ENCODE measurements at regions of chr12 and their contacts with region 1.

Region 1: DNA sequence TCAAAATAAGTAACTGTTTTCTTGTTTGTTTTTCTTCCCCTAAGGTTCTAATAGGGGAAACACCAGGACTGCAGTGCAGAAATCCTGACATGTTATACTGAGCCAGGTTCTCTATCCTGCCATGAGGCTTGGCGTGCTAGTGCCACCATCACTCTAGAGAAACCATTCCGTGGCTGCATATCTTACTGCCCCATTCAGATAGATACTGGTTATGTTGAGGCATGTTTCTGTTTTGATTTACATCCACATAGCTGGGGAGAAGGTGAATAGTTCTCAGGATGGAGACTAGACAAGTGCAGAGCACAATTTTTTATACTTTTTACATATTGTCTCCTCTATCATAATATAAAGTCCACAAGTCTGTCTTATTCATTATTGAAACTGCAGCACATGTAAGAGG is 11.5 kb downstream of the MAGOHB start:
- DNase-seq: no peak
- H3K4me3 ChIP-seq: no peak overlapping the region
- H3K4me3 Mint-ChIP-seq: peak overlapping the region in 6 of 7 donors; percentile 41 to 83 (median 66)
- H3K27ac ChIP-seq: no peak overlapping the region
- H3K27ac Mint-ChIP-seq: peak overlapping the region in 5 of 8 donors; percentile 26 to 86 (median 40)
- H3K4me1 ChIP-seq: peaks cover 15% of the 10 kb centered on the region
- H3K4me1 Mint-ChIP-seq: peaks cover 24 to 40% (median 34%) of the 10 kb centered on the region in 3 donors
- H3K27me3 ChIP-seq: no peaks in the 10 kb centered on the region
- H3K27me3 Mint-ChIP-seq: no peaks in the 10 kb centered on the region

Region 2: GRCh38 chr12:10613349-10614055 is 11.6 kb after region 1 on chr12 and contains the start of gene MAGOHB:
- CTCF ChIA-PET with region 1: no interaction called
- POLR2A ChIA-PET with region 1: interaction called, 12 read pairs
- DNase-seq: peak; percentile 95 to 99 (median 97)
- H3K4me3 ChIP-seq: peak within 1 kb of the TSS; percentile 89
- H3K4me3 Mint-ChIP-seq: peak within 1 kb of the TSS; percentile 95 to 100 (median 99)
- H3K27ac ChIP-seq: peak within 1 kb of the TSS; percentile 97
- H3K27ac Mint-ChIP-seq: peak within 1 kb of the TSS; percentile 98 to 100 (median 99)
- H3K4me1 ChIP-seq: peaks cover 17% of the 10 kb centered on the region
- H3K4me1 Mint-ChIP-seq: peaks cover 26 to 51% (median 49%) of the 10 kb centered on the region in 3 donors
- H3K27me3 ChIP-seq: no peaks in the 10 kb centered on the region
- H3K27me3 Mint-ChIP-seq: peaks cover 0 to 4% of the 10 kb centered on the region in 2 donors
- total RNA-seq, gene MAGOHB: 130 to 138 TPM

Region 3: DNA sequence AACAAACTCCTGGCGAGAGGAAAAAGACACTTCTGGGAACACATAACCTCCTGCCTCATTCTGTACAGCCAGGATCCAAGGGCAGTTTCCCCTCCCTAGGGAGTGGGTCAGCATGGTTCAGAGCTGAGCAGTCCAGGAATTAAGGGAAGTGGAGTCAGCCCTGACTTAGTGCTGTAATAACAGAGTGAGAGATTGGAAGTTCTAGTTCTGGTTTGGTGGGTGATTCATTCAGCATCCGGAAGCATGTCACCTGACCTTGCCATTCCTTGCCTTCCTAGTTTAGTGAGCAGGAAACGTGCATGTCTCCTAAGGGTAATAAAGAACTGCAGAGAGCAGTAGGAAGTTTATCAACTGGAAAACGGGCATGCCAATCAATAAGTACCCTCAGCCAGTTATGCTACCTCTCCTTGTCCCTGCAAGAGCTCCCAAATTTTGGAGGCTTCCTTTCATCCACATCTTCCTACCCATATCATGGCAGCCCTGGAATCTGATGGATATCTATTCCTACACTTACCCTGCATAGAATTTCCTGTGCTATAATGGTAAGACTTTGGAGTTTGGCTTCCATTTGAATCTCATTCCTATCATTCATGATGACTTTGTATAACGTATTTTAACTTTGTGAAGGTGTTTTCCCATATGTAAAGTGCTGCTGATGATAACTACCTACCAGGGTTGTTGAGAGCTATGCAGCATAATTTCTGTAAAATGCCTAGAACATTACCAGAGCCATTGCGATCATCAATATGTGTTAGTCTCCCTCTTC is 40.1 kb after region 1 on chr12:
- CTCF ChIA-PET with region 1: no interaction called
- POLR2A ChIA-PET with region 1: no interaction called
- DNase-seq: no peak
- H3K4me3 ChIP-seq: no peak overlapping the region
- H3K4me3 Mint-ChIP-seq: no peak overlapping the region
- H3K27ac ChIP-seq: no peak overlapping the region
- H3K27ac Mint-ChIP-seq: peak overlapping the region in 1 of 8 donors; percentile 55
- H3K4me1 ChIP-seq: no peaks in the 10 kb centered on the region
- H3K4me1 Mint-ChIP-seq: peaks cover 0 to 2% (median 0%) of the 10 kb centered on the region in 3 donors
- H3K27me3 ChIP-seq: no peaks in the 10 kb centered on the region
- H3K27me3 Mint-ChIP-seq: peaks cover 0 to 2% of the 10 kb centered on the region in 2 donors